ENCODE measurements at regions of chr6 and their contacts with region 1.

Region 1: DNA sequence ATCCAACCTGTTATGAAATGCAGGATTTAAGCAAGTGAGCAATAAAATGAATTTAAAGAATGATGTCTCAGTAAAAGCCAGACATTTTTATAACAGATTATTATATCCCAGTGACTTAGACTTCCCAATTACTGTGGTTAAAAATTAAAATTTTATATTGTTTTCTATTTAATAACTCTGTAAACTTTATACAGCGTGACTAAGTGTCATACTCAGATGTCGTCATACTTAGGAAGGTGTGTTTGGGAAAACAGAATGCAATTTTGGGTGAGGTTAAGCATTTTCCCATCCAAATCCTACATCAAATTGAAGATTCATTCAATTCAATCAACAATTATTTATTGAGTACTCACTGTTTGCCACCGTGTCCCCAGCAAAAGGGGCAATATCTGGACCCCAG is 31.4 kb upstream of the FRMD1 start:
- DNase-seq: no peak
- H3K4me3 ChIP-seq: no peak overlapping the region
- H3K27ac ChIP-seq: no peak overlapping the region
- H3K4me1 ChIP-seq: no peaks in the 10 kb centered on the region
- H3K27me3 ChIP-seq: no peaks in the 10 kb centered on the region
- CTCF ChIP-seq: no peak
- POLR2A ChIP-seq: no peak

Region 2: DNA sequence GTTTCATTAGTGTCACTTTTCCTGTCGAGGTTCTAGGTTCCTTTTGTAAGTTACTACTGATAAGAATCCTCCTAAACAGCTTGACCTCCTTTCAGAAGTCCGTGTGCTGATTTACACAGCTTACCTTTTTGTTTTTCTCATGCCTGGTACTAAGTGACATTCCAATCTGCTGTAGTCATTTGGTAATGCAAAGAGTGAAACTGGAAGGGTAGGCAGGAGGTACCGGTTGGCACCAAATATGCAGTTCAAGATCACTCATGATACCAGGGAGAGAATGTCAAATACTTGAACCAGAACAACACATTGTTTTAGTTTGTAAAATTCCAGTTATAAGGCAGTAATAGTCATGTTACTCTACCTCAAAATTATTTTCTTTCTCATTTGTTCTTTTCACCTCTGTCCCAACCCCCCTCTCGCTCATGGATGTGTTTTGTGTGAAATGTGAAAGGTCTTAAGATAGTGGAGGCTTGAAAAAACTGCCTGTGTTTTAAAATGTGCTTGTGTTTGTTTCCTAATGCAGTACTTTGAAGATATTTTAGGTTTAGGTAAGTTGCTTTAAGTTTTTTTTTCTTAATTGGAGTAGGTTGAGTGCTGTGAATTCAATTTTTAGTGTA is 260.5 kb before region 1 on chr6:
- intact Hi-C with region 1: no loop called
- DNase-seq: peak in 1 of 2 donors; percentile 56
- H3K4me3 ChIP-seq: peak overlapping the region in 1 of 3 donors; percentile 36
- H3K27ac ChIP-seq: peak overlapping the region; percentile 76 to 87
- H3K4me1 ChIP-seq: no peaks in the 10 kb centered on the region
- H3K27me3 ChIP-seq: no peaks in the 10 kb centered on the region
- CTCF ChIP-seq: no peak
- POLR2A ChIP-seq: no peak

Region 3: DNA sequence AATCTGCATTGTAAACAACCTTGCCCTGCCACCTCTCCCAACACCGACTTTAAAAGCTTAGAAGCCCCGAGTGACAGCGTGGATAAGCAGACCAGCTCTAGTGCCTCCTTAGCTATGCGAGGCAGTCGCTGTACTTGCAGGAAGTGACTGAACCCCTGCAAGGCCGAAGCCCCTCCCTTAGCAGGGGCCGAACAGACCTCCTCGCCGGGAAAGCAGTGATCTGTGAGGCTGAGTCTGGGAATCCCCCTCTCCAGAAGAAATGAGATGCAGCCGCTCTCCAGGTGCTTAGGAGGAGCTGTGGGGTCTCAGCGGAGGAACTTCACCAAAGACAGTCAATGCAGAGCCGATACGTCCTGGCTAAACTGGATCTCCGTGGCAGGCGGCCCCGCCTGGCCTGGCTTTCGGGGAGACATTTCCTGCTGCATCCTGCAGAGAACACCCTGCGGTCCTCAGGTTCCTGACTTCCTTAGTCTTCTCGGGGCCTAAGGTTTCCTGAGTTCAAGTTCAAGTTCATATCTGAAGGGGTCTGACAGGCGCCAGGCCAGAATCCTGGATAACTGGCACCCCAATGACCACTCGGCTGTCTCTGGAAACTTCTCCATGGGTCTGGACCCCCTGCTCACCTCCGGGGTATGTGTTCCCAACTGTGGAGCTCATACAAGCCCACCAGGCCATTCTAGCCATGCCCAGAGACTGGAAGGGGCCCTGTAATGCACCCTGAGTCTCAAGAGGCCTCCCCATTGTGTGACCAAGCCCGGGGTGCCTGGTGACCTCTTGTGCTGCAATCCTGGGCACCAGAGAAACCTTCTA is 11.0 kb before region 1 on chr6:
- intact Hi-C with region 1: loop called (anchors 1 kb)
- DNase-seq: no peak
- H3K4me3 ChIP-seq: no peak overlapping the region
- H3K27ac ChIP-seq: no peak overlapping the region
- H3K4me1 ChIP-seq: peaks cover 0 to 7% of the 10 kb centered on the region in 2 donors
- H3K27me3 ChIP-seq: peaks cover 5 to 32% of the 10 kb centered on the region in 2 donors
- CTCF ChIP-seq: no peak
- POLR2A ChIP-seq: no peak

Region 4: GRCh38 chr6:168150551-168151320 is 40.3 kb after region 1 on chr6:
- intact Hi-C with region 1: no loop called
- DNase-seq: peak in 1 of 2 donors; percentile 16
- H3K4me3 ChIP-seq: peak overlapping the region in 1 of 3 donors; percentile 2
- H3K27ac ChIP-seq: no peak overlapping the region
- H3K4me1 ChIP-seq: no peaks in the 10 kb centered on the region
- H3K27me3 ChIP-seq: peaks cover 0 to 14% of the 10 kb centered on the region in 2 donors
- CTCF ChIP-seq: peak in 2 of 3 donors; percentile 32 to 63
- POLR2A ChIP-seq: no peak